GM12878 (cell line): ENCODE measurements at regions of chr17 and their contacts with region 1.

Region 1: GRCh38 chr17:73316919-73317505 is 5.2 kb upstream of the CDC42EP4 start:
- DNase-seq: peak; percentile 70
- ATAC-seq: peak; percentile 85
- H3K4me3 ChIP-seq: no peak overlapping the region
- H3K27ac ChIP-seq: no peak overlapping the region; the same call in 1 of the 2 replicates
- H3K4me1 ChIP-seq: peaks cover 12% of the 10 kb centered on the region
- H3K27me3 ChIP-seq: no peaks in the 10 kb centered on the region
- CTCF ChIP-seq: no peak
- EP300 ChIP-seq: no peak
- POLR2A ChIP-seq: no peak
- RAD21 ChIP-seq: no peak

Region 2: GRCh38 chr17:73271072-73271471 is 45.9 kb before region 1 on chr17:
- CTCF ChIA-PET with region 1: interaction called, 3 read pairs
- POLR2A ChIA-PET with region 1: interaction called, 6 read pairs
- RAD21 ChIA-PET with region 1: interaction called, 9 read pairs
- SMC1A ChIA-PET with region 1: interaction called, 18 read pairs
- in situ Hi-C with region 1: no loop called
- intact Hi-C with region 1: loop called (anchors 1 kb)
- DNase-seq: peak; percentile 88
- ATAC-seq: peak; percentile 99
- H3K4me3 ChIP-seq: no peak overlapping the region
- H3K27ac ChIP-seq: peak overlapping the region; percentile 82
- H3K4me1 ChIP-seq: peaks cover 14% of the 10 kb centered on the region
- H3K27me3 ChIP-seq: no peaks in the 10 kb centered on the region
- CTCF ChIP-seq: no peak
- EP300 ChIP-seq: peak; percentile 74 to 88; a peak in 3 of 4 replicates
- POLR2A ChIP-seq: 0 out of 2 replicates have a peak, but pooled peaks have one; percentile 38
- RAD21 ChIP-seq: no peak

Region 3: GRCh38 chr17:73297934-73298861 is 18.8 kb before region 1 on chr17:
- CTCF ChIA-PET with region 1: no interaction called
- POLR2A ChIA-PET with region 1: interaction called, 10 read pairs
- RAD21 ChIA-PET with region 1: interaction called, 4 read pairs
- SMC1A ChIA-PET with region 1: interaction called, 12 read pairs
- in situ Hi-C with region 1: no loop called
- intact Hi-C with region 1: no loop called
- DNase-seq: no peak
- ATAC-seq: peak; percentile 91
- H3K4me3 ChIP-seq: peak overlapping the region; percentile 14; the same call in 1 of the 2 replicates
- H3K27ac ChIP-seq: peak overlapping the region; percentile 37
- H3K4me1 ChIP-seq: peaks cover 9% of the 10 kb centered on the region
- H3K27me3 ChIP-seq: no peaks in the 10 kb centered on the region
- CTCF ChIP-seq: no peak
- EP300 ChIP-seq: no peak
- POLR2A ChIP-seq: no peak
- RAD21 ChIP-seq: no peak

Region 4: DNA sequence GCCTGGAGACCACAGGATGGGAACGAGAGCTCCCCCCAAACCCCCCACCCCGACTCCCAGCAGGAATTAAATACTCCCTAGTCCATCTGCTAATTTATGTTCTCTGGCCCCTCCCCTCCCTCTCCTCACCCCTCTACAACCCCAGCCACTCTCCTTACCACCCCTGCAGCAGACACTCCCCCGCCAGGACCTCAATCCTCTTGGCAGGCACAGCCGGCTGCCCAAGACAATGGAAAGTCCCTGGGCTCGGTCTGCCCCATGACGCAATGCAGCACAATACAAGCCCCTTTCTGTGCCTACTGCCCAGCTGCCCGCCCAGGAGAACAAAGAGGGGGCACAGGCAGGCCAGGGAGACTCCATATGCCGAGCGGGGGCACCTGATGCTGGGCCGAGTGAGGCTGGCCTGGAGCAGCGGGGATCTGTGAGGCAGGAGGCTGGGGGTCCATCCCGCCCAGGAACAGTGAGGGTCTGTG is 25.1 kb after region 1 on chr17:
- CTCF ChIA-PET with region 1: interaction called, 25 read pairs
- POLR2A ChIA-PET with region 1: interaction called, 4 read pairs
- RAD21 ChIA-PET with region 1: interaction called, 9 read pairs
- SMC1A ChIA-PET with region 1: interaction called, 13 read pairs
- in situ Hi-C with region 1: no loop called
- intact Hi-C with region 1: loop called (anchors 2 kb)
- DNase-seq: peak; percentile 20
- ATAC-seq: peak; percentile 84
- H3K4me3 ChIP-seq: no peak overlapping the region
- H3K27ac ChIP-seq: no peak overlapping the region
- H3K4me1 ChIP-seq: no peaks in the 10 kb centered on the region
- H3K27me3 ChIP-seq: no peaks in the 10 kb centered on the region
- CTCF ChIP-seq: no peak
- EP300 ChIP-seq: no peak
- POLR2A ChIP-seq: no peak
- RAD21 ChIP-seq: no peak

Region 5: DNA sequence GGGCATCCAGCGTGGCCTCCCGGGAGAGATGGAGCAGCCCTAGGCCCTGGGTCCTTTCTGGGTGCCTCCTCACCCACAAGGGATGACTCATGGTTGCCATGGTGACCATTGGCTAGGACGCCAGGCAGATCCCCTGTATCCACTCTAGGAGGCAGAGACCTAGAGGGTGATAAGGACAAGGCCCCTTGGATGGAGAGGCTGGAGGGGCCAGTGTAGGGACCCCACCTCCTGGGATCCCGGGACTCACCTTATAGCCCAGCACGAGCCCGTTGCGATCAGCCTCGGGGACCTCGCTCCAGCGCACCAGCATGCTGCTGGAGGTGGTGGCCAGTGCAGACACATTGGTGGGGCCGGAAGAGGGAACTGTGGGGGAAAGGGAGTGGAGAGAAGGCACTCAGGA is 77.0 kb after region 1 on chr17:
- CTCF ChIA-PET with region 1: no interaction called
- POLR2A ChIA-PET with region 1: no interaction called
- RAD21 ChIA-PET with region 1: no interaction called
- SMC1A ChIA-PET with region 1: no interaction called
- in situ Hi-C with region 1: no loop called
- intact Hi-C with region 1: no loop called
- DNase-seq: no peak
- ATAC-seq: no peak
- H3K4me3 ChIP-seq: no peak overlapping the region
- H3K27ac ChIP-seq: no peak overlapping the region
- H3K4me1 ChIP-seq: no peaks in the 10 kb centered on the region
- H3K27me3 ChIP-seq: no peaks in the 10 kb centered on the region; a peak in 2 of 4 replicates
- CTCF ChIP-seq: no peak
- EP300 ChIP-seq: no peak
- POLR2A ChIP-seq: no peak
- RAD21 ChIP-seq: no peak

Region 6: DNA sequence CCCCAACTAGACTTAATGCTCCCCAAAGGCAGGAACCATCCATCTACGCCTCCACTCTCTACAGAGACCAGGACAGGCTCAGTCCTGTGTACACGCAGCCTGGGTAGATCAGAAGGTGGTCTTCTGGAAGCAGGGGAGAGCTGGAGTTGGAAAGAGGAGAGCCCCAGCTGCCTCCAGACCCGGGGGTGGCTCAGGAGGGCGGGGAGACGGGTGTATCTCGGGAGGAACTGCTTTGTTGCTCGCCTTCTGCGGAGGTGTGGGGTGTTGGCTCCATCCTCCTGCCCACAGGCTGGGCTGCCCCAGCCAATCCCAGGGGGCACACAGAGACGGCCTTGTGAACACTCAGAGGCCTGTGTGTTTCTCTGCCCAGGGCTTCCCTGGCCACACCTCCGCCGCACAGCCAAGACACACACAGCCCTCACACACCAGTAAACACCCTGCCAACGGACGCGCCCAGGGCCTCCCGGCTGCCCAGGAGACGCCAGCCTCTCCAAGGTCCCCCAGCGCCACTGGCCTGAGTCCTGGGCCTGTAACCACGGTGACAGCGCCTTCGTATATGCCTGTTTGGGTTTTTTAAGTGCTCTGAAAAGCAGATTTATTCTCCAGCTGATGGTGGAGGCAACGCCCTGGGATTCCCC is 138.2 kb after region 1 on chr17:
- CTCF ChIA-PET with region 1: no interaction called
- POLR2A ChIA-PET with region 1: no interaction called
- RAD21 ChIA-PET with region 1: no interaction called
- SMC1A ChIA-PET with region 1: no interaction called
- in situ Hi-C with region 1: no loop called
- intact Hi-C with region 1: no loop called
- DNase-seq: no peak
- ATAC-seq: no peak
- H3K4me3 ChIP-seq: no peak overlapping the region
- H3K27ac ChIP-seq: no peak overlapping the region
- H3K4me1 ChIP-seq: no peaks in the 10 kb centered on the region
- H3K27me3 ChIP-seq: peaks cover 1 to 2% of the 10 kb centered on the region in 2 experiments; a peak in 2 of 4 replicates
- CTCF ChIP-seq: no peak
- EP300 ChIP-seq: no peak
- POLR2A ChIP-seq: no peak
- RAD21 ChIP-seq: no peak